Heart left ventricle (tissue), 16 donors: ENCODE measurements at regions of chr1 and their contacts with region 1.

Region 1: DNA sequence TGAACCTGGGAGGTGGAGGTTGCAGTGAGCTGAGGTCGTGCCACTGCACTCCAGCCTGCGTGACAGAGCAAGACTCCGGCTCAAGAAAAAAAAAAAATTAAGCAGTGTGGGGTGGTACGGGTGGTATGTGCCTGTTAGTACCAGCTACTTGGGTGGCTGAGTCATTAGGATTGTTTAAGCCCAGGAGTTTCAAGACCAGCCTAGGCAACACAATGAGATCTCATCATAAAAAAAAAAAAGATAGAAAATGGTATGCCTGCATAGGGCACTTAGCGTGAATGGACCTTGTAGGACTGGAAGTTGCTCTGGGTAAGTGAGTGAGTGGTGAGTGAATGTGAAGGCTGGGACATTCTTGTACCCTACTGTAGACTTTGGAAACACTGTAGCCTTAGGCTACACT is 37.0 kb downstream of the TBCE start:
- DNase-seq: no peak
- ATAC-seq: no peak
- H3K4me3 ChIP-seq: no peak overlapping the region
- H3K27ac ChIP-seq: no peak overlapping the region
- H3K4me1 ChIP-seq: peaks cover 0 to 8% (median 1%) of the 10 kb centered on the region in 12 donors
- H3K27me3 ChIP-seq: no peaks in the 10 kb centered on the region
- CTCF ChIP-seq: no peak
- POLR2A ChIP-seq: no peak

Region 2: DNA sequence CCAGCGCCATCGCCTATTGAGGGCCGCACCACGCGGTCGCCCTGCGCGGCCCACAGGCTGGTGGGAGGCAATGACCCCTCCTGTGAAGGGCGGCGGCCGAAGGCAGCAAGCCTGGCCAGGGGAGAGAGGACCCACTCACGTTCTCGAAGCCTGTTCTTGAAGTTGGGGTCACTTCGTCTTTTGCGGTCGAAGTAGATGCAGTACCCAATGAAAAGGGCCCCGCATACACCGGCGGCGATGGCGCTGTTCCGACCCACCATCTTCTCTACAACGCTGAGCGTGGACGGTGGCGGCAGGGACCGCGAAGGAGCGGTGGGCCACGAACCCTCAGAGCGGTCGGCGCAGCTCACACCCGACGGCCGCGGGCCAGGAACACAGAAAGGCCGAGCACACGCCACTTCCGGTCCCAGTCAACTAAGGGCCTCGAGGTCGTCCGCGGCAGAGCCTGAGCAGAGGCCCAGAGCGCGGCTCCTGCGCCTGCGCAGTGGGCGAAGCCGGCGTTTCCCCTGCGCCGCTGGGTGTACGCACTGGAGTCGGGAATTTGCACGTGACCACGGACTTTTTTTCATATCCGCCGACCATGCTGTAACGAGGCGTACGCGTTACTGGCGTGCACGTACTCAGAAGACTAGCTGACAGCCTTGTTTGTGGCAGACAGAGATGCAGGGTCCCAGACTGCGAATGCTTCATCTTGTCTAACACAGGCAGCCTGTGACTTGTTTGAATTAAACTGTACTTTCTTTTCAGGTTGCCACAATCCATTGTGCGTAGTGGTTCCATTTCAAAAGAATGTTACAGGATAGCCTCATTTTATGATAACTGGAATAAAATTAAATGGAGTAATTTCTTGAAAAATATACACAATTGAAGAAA is 275.5 kb before region 1 on chr1 and contains the start of gene TOMM20:
- intact Hi-C with region 1: no loop called
- DNase-seq: peak; percentile 96 to 98 (median 97)
- ATAC-seq: peak; percentile 98 to 99 (median 98)
- H3K4me3 ChIP-seq: peak within 1 kb of the TSS; percentile 76 to 100 (median 89)
- H3K27ac ChIP-seq: peak within 1 kb of the TSS; percentile 74 to 95 (median 91)
- H3K4me1 ChIP-seq: peaks cover 0 to 45% (median 16%) of the 10 kb centered on the region in 12 donors
- H3K27me3 ChIP-seq: no peaks in the 10 kb centered on the region
- CTCF ChIP-seq: no peak
- POLR2A ChIP-seq: peak in 1 of 2 donors; percentile 67
- total RNA-seq, gene TOMM20: 56.7 to 100 (median 83.3) TPM

Region 3: GRCh38 chr1:235336903-235337302 is 67.3 kb before region 1 on chr1:
- intact Hi-C with region 1: loop called in 1 of 10 experiments (anchors 10 kb)
- DNase-seq: peak in 1 of 5 donors; percentile 23
- ATAC-seq: peak; percentile 89 to 97 (median 96)
- H3K4me3 ChIP-seq: peak overlapping the region in 1 of 12 donors; percentile 28
- H3K27ac ChIP-seq: peak overlapping the region in 2 of 12 donors; percentile 13 to 68
- H3K4me1 ChIP-seq: peaks cover 0 to 34% (median 19%) of the 10 kb centered on the region in 12 donors
- H3K27me3 ChIP-seq: no peaks in the 10 kb centered on the region
- CTCF ChIP-seq: no peak
- POLR2A ChIP-seq: no peak

Region 4: DNA sequence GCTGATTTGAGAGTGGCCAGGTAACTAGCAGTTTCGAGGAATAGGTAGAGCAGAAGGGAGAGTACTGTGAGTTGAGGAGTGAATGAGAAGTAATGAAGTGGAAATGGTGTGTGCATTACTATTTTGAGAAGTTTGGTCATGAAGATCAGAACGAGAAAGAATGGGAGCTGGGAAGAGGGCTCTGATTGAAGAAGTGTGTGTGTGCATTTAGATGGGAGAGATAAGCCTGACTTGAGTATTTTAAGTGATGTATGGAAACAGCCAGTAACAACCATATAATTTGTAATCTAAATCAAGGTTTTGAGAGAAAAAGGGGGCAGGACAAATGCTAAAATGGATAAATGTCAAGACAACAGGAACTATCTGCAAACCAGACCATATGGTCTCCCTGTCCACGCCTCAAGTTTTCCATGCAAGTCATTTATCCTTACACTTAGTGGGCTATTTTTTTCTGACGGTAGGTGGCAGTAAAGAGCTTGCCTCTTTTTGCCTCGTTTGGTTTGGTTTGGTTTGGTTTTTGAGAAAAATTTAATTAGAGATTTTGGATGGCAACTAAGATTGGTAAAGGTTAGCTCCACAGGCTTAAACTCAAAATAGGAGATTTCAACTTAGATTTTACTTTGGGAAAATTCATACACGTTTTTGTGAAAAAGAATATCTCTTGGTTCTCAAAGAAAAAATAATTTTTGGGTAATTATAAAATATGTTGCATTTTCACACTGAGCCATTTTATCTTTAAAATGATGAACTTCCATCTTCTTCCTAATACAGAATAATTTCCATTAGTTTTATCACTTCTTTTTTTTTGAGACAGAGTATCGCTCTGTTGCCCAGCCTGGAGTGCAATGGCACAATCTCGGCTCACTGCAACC is 109.5 kb after region 1 on chr1:
- intact Hi-C with region 1: no loop called
- DNase-seq: peak in 2 of 5 donors; percentile 19 to 23
- ATAC-seq: peak in 1 of 4 donors; percentile 56
- H3K4me3 ChIP-seq: no peak overlapping the region
- H3K27ac ChIP-seq: no peak overlapping the region
- H3K4me1 ChIP-seq: no peaks in the 10 kb centered on the region
- H3K27me3 ChIP-seq: no peaks in the 10 kb centered on the region
- CTCF ChIP-seq: peak; percentile 81 to 95 (median 92)
- POLR2A ChIP-seq: no peak